ENCODE measurements at regions of chr1 and their contacts with region 1.

Region 1: DNA sequence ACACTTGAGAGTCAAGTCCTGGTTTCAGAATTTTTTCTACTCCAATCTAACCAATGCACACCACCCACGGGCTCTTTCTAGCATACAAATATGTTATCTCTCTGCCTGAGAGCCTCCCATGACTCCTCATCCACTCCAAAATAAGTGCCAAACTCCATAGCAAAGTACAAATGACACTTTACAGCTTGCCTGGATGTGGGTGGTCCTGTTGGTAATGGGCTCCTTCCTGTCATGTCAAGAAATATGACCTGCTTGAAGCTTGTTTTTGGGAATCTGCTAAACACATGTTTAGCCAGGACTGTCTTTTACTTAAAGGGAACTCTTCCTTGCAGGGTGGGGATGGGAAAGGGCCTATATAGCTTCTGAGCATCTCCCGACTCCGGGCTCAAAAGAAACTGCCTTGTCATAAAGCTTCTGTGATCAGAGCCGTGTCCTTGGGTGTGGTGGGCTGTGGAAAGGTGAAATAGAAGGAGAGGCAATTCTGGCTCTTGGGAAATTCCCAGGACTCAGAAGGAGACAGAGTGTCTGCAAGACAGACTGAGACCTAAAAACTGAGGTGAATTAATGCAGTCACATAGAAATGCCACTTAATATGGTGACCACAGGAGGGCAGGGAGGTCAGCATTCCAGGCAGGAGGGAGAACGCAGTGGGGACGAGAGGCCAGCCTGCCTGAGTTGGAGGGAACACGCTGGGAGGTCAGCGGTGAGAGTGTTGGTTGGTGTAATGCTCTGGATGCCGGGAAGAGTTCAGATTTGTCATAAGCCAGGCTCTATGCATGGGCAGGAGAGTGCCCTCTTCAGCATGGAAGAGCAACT is 6.1 kb upstream of the IGFN1 start:
- DNase-seq: no peak
- H3K4me3 ChIP-seq: no peak overlapping the region
- H3K27ac ChIP-seq: no peak overlapping the region
- H3K4me1 ChIP-seq: no peaks in the 10 kb centered on the region
- H3K27me3 ChIP-seq: no peaks in the 10 kb centered on the region
- CTCF ChIP-seq: peak; percentile 46

Region 2: DNA sequence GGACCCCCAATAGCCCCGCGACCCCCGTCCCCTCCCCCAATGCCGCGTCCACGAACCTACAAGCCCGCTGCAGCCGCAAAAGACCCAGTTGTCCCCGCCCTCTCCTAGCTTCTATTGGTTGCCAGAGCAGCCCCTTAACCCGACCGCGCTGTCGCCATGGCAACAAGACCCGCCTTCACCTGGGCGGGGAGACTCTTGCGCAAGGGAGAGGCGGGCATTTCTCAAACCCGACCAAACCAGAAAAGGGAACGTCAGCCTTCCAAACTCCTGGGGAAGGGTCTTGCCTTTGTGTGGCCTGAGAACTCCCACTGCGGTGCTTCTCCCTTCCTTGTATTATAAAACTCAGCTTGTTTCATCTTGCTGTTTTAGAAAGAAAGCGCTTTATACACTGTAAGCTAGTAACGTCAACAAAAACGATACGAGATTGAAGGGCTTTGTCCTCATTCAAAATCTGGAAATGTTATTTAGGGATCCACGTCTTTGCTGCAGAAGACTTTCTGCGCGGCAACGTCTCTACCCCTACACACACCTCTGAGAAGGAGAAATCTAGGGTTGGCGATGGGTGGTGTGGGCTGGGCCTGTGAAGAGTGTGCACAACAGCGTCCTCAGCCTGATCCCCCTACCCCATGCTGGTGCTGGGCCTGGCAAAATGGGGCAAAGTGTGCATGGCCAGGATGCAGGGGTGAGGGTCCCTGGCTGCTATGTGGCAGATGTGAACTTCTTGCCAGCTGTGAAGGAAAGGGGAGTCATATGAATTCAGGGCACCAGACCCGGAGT is 29.9 kb before region 1 on chr1 and contains the start of gene TMEM9:
- intact Hi-C with region 1: loop called (anchors 1 kb)
- DNase-seq: peak; percentile 100
- H3K4me3 ChIP-seq: peak within 1 kb of the TSS; percentile 72
- H3K27ac ChIP-seq: no peak within 1 kb of the TSS
- H3K4me1 ChIP-seq: peaks cover 5% of the 10 kb centered on the region
- H3K27me3 ChIP-seq: no peaks in the 10 kb centered on the region
- CTCF ChIP-seq: no peak
- total RNA-seq, gene TMEM9: 35.4 to 38.2 TPM

Measured in colonic mucosa (tissue), 4 donors.